Tibial artery (tissue), 4 donors: ENCODE measurements at regions of chr4 and their contacts with region 1.

Region 1: DNA sequence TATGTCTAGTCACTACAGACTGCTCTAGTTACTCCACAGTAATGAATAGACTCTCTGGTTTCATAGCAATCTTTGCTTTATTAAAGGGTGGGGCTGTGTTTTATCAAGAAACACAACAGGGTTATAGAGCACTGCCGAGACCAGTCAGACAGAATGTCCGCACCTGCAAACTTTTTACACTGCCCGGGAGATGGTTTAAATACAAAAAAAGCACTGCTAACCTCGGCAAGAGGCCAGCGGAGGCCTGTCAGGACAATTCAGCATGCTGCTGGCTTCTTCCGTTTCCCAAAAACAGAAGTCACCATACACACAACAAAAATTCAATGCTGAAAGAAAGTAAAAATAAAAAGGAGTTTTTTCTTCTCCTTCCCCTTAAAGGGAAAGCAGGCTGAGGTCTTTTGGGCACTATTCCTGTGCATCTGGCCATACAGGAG is 67.4 kb downstream of the IRF2 start:
- DNase-seq: peak in 1 of 2 donors; percentile 55
- H3K4me3 ChIP-seq: no peak overlapping the region
- H3K27ac ChIP-seq: peak overlapping the region; percentile 18 to 20
- H3K4me1 ChIP-seq: peaks cover 0 to 22% (median 9%) of the 10 kb centered on the region in 4 donors
- H3K27me3 ChIP-seq: no peaks in the 10 kb centered on the region
- CTCF ChIP-seq: no peak

Region 2: GRCh38 chr4:184171011-184171410 is 236.0 kb before region 1 on chr4:
- intact Hi-C with region 1: no loop called
- DNase-seq: no peak
- H3K4me3 ChIP-seq: no peak overlapping the region
- H3K27ac ChIP-seq: no peak overlapping the region
- H3K4me1 ChIP-seq: peaks cover 0 to 11% (median 6%) of the 10 kb centered on the region in 4 donors
- H3K27me3 ChIP-seq: peaks cover 0 to 20% of the 10 kb centered on the region in 2 donors
- CTCF ChIP-seq: no peak

Region 3: GRCh38 chr4:184364100-184364921 is 42.7 kb before region 1 on chr4:
- intact Hi-C with region 1: loop called (anchors 2 kb)
- DNase-seq: no peak
- H3K4me3 ChIP-seq: no peak overlapping the region
- H3K27ac ChIP-seq: no peak overlapping the region
- H3K4me1 ChIP-seq: peaks cover 0 to 29% (median 16%) of the 10 kb centered on the region in 4 donors
- H3K27me3 ChIP-seq: no peaks in the 10 kb centered on the region
- CTCF ChIP-seq: no peak

Region 4: GRCh38 chr4:184805462-184806228 is 398.7 kb after region 1 on chr4:
- intact Hi-C with region 1: no loop called
- DNase-seq: peak in 1 of 2 donors; percentile 67
- H3K4me3 ChIP-seq: no peak overlapping the region
- H3K27ac ChIP-seq: no peak overlapping the region
- H3K4me1 ChIP-seq: peaks cover 0 to 47% (median 24%) of the 10 kb centered on the region in 4 donors
- H3K27me3 ChIP-seq: no peaks in the 10 kb centered on the region
- CTCF ChIP-seq: no peak